CD8-positive, alpha-beta T cell (primary cell): ENCODE measurements at regions of chr21 and their contacts with region 1.

Region 1: GRCh38 chr21:31088315-31088714 is 50.0 kb upstream of the KRTAP19-8 start:
- DNase-seq: peak in 1 of 9 experiments; percentile 7
- ATAC-seq: no peak
- H3K4me3 ChIP-seq: no peak overlapping the region
- H3K4me3 Mint-ChIP-seq: no peak overlapping the region
- H3K27ac ChIP-seq: no peak overlapping the region
- H3K27ac Mint-ChIP-seq: no peak overlapping the region
- H3K4me1 ChIP-seq: no peaks in the 10 kb centered on the region
- H3K4me1 Mint-ChIP-seq: peaks cover 8% of the 10 kb centered on the region
- H3K27me3 ChIP-seq: peaks cover 0 to 2% of the 10 kb centered on the region in 2 experiments
- H3K27me3 Mint-ChIP-seq: no peaks in the 10 kb centered on the region
- CTCF ChIP-seq: no peak

Region 2: DNA sequence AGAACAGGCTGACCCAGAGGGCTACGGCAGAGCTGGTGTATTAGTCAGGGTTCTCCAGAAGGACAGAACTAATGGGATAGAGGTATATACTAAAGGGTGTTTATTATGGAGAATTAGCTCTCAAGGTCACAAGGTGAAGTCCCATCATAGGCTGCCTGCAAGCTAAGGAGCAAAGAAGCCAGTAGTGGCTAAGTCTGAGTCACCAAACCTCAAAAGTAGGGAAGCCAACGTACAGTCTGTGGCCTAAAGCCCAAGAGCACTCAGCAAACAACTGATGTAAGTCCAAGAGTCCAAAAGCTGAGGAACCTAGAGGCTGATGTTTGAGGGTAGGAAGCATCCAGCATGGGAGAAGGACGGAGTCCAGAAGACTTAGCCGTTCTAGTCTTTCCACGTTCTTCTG is 1610.4 kb before region 1 on chr21:
- CTCF ChIA-PET with region 1: interaction called, 3 read pairs
- POLR2A ChIA-PET with region 1: no interaction called
- intact Hi-C with region 1: loop called in 1 of 2 experiments (anchors 10 kb)
- DNase-seq: no peak
- ATAC-seq: no peak
- H3K4me3 ChIP-seq: no peak overlapping the region
- H3K4me3 Mint-ChIP-seq: no peak overlapping the region
- H3K27ac ChIP-seq: no peak overlapping the region
- H3K27ac Mint-ChIP-seq: no peak overlapping the region
- H3K4me1 ChIP-seq: no peaks in the 10 kb centered on the region
- H3K4me1 Mint-ChIP-seq: peaks cover 19% of the 10 kb centered on the region
- H3K27me3 ChIP-seq: no peaks in the 10 kb centered on the region
- H3K27me3 Mint-ChIP-seq: no peaks in the 10 kb centered on the region
- CTCF ChIP-seq: no peak

Region 3: DNA sequence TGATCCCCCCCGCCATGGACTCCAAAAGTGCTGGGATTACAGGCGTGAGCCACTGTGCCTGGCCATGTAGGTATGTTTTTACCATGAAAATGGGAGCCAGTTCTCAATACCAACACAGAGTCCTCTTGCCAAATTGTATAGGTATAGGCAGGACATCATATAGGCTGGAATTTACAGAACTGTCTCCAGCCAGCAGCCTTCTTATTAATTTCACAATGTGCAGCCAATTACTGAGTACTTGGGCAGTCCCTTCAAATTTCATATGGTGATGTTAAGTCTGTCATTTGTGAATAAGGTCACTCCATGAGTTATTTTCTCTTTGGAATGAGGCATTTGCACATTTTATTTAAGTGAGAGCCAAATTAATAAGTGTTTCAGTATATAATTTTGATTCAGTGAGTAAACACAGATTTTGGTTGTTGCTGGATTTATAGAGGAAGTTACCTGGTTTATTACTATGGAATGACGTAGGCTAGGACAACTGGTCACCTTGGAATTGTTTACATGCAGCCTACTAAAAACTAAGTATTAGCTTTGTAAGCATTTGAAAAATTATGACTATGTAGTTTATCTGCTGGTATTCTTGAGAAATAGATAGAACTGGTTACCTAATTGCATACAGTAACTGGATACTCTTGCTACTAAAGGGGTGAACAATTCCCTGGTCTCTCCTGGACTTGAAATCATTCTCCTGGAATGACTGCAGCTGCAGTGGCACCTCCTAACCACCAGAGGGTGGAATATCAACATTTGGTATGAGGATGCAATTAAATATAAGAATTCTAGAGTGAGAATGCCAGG is 747.7 kb before region 1 on chr21:
- CTCF ChIA-PET with region 1: interaction called, 6 read pairs
- POLR2A ChIA-PET with region 1: no interaction called
- intact Hi-C with region 1: loop called in 1 of 2 experiments (anchors 1 kb)
- DNase-seq: peak in 6 of 9 experiments; percentile 0 to 28 (median 18)
- ATAC-seq: no peak
- H3K4me3 ChIP-seq: no peak overlapping the region
- H3K4me3 Mint-ChIP-seq: no peak overlapping the region
- H3K27ac ChIP-seq: no peak overlapping the region
- H3K27ac Mint-ChIP-seq: no peak overlapping the region
- H3K4me1 ChIP-seq: no peaks in the 10 kb centered on the region
- H3K4me1 Mint-ChIP-seq: no peaks in the 10 kb centered on the region
- H3K27me3 ChIP-seq: no peaks in the 10 kb centered on the region
- H3K27me3 Mint-ChIP-seq: peaks cover 8% of the 10 kb centered on the region
- CTCF ChIP-seq: peak; percentile 65

Region 4: DNA sequence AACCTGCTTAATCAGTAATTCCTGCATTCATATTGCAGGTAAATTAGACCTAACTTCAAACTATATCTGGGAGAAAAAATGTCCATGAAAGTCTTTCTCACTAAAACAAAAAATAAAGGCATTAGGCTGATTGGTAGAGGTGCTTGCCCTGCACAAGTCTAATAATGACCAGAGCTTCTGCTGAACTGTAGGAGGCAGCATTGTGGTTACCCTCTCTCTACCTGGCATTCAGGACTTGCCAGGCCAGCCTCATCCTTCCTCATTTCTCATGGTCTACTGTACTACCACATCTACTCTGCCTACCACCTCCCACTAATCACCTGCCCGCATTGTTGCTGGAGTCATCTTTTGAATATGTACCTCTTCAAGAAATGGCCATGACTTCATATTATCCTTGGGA is 146.1 kb before region 1 on chr21:
- CTCF ChIA-PET with region 1: no interaction called
- POLR2A ChIA-PET with region 1: no interaction called
- intact Hi-C with region 1: loop called in 1 of 2 experiments (anchors 1 kb)
- DNase-seq: peak in 1 of 9 experiments; percentile 13
- ATAC-seq: no peak
- H3K4me3 ChIP-seq: no peak overlapping the region
- H3K4me3 Mint-ChIP-seq: no peak overlapping the region
- H3K27ac ChIP-seq: no peak overlapping the region
- H3K27ac Mint-ChIP-seq: no peak overlapping the region
- H3K4me1 ChIP-seq: no peaks in the 10 kb centered on the region
- H3K4me1 Mint-ChIP-seq: no peaks in the 10 kb centered on the region
- H3K27me3 ChIP-seq: no peaks in the 10 kb centered on the region
- H3K27me3 Mint-ChIP-seq: peaks cover 7% of the 10 kb centered on the region
- CTCF ChIP-seq: no peak